Mammary epithelial cell (primary cell): ENCODE measurements at regions of chr20 and their contacts with region 1.

Region 1: DNA sequence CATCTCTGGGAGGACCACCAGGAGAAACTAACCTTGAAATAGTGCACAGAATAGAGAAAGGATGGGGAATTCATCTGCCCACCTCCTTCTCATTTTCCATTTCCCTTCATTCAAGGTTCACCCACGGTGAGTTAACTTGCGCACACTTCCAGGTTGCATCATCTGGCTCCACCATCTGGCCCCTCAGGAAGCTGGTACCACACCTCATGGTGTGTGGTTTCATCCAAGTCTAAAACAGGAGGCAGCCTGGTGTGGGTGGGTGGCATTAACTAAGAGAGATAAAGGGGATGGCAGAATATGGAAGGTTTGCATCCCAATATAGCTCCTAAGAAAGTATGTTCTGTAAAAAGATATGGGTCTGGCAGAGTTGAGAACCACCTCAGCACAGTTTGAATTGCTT is 3.8 kb downstream of the ZNF334 start:
- DNase-seq: no peak
- H3K4me3 ChIP-seq: no peak overlapping the region
- H3K27ac ChIP-seq: no peak overlapping the region
- H3K4me1 ChIP-seq: no peaks in the 10 kb centered on the region
- H3K27me3 ChIP-seq: no peaks in the 10 kb centered on the region
- CTCF ChIP-seq: no peak

Region 2: GRCh38 chr20:46470053-46470452 is 39.5 kb before region 1 on chr20:
- CTCF ChIA-PET with region 1: no interaction called
- dilution Hi-C with region 1: loop called (anchors 5 kb)
- in situ Hi-C with region 1: no loop called
- intact Hi-C with region 1: no loop called
- DNase-seq: no peak
- H3K4me3 ChIP-seq: no peak overlapping the region
- H3K27ac ChIP-seq: no peak overlapping the region
- H3K4me1 ChIP-seq: no peaks in the 10 kb centered on the region
- H3K27me3 ChIP-seq: no peaks in the 10 kb centered on the region
- CTCF ChIP-seq: no peak